Activated naive CD4-positive, alpha-beta T cell treated with anti-CD3 and anti-CD28 coated beads, Interleukin-2, amount 10 ng/mL, durations not matched to agents 7 days and 5 days (primary cell): ENCODE measurements at regions of chr5 and their contacts with region 1.

Region 1: DNA sequence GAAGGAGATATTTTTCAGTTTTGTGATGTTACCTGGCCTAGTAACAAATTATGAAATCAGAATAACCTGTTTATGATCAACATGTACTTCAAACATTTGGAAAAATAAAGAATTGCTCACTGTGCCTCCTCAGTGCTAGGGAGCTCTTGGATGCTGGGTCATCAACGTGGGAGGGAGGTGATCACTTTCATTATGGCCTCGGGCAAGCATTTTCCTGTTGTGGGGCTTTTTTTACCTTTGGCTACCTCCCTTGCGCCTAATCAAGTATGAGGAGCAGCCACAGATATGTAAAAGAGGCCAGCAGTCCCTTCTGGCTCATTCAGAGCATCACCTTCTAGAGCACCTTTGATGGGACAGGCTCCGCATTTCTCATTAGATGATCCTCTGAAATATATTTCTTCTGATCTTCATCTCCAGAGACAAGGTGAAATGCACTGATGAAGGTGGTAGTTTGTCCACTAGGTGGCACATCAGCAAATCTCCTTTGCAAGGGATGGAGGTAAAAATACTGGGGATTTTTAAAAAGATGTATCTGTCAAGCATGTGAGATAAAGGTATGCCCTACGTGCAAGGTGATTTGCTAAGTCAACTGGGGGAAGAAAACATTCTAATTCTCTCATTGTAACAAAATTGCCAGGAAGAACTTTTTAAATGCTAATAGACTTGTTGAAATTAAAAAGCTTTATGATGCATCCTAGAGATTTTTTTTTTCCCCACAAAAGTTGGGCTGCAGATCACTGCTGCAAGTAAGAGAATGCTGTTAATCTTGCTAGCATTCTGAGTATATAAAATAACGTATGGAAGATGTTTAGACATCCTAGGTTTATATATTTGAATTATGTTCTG is 218.2 kb downstream of the MAST4 start:
- DNase-seq: peak; percentile 70
- H3K4me3 Mint-ChIP-seq: no peak overlapping the region
- H3K27ac Mint-ChIP-seq: no peak overlapping the region
- H3K4me1 Mint-ChIP-seq: peaks cover 23% of the 10 kb centered on the region
- H3K27me3 Mint-ChIP-seq: peaks cover 16% of the 10 kb centered on the region

Region 2: GRCh38 chr5:66828548-66829357 is 14.4 kb after region 1 on chr5:
- CTCF ChIA-PET with region 1: interaction called, 58 read pairs
- DNase-seq: peak; percentile 83
- H3K4me3 Mint-ChIP-seq: peak overlapping the region; percentile 77
- H3K27ac Mint-ChIP-seq: peak overlapping the region; percentile 93
- H3K4me1 Mint-ChIP-seq: peaks cover 58% of the 10 kb centered on the region
- H3K27me3 Mint-ChIP-seq: no peaks in the 10 kb centered on the region

Region 3: DNA sequence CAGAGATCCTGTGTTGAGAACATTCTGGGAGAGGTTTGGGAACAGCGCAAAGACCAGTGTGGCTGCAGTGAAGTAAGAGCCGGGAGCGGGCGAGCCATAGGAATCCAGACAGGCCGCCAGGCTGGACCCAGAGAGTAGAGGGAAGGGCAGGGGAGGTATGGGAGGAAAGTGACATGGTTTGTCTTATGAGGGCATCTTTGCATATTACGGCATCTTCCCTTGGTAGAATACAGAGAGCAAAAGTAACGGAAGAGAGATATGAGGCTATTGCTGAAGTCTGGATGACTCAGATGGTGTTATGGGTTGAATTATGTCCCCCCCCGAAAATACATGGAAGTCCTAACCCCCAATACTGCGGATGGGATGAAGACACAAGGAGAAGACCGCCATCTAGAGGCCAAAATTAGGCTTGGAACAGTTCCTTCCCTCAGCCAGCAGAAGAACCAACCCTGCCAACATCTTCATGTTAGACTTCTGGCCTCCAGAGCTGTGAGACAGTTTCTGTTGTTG is 50.0 kb after region 1 on chr5:
- CTCF ChIA-PET with region 1: interaction called, 76 read pairs
- DNase-seq: peak; percentile 42
- H3K4me3 Mint-ChIP-seq: no peak overlapping the region
- H3K27ac Mint-ChIP-seq: no peak overlapping the region
- H3K4me1 Mint-ChIP-seq: peaks cover 4% of the 10 kb centered on the region
- H3K27me3 Mint-ChIP-seq: peaks cover 14% of the 10 kb centered on the region

Region 4: DNA sequence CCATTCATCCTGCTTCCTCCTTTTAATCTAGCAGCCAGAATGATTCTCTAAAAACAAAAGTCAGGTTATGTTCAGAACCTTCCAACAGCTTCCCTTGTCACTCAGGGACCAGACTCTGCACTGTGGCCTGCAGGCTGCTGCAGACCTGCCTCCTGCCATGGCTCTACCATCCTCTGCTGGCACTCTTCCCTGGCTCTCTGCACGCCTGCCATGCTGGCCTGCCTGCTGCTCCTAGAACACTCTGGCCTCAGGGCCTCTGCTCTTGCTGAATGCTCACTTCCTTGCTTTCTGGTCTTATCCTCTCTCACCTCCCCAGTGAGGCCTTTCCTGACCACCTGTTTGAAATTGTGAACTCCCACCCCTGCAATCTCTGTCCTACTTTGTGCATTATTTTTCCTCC is 232.8 kb after region 1 on chr5:
- CTCF ChIA-PET with region 1: no interaction called
- DNase-seq: no peak
- H3K4me3 Mint-ChIP-seq: no peak overlapping the region
- H3K27ac Mint-ChIP-seq: no peak overlapping the region
- H3K4me1 Mint-ChIP-seq: peaks cover 8% of the 10 kb centered on the region
- H3K27me3 Mint-ChIP-seq: no peaks in the 10 kb centered on the region